ENCODE measurements at regions of chr15 and their contacts with region 1.

Region 1: DNA sequence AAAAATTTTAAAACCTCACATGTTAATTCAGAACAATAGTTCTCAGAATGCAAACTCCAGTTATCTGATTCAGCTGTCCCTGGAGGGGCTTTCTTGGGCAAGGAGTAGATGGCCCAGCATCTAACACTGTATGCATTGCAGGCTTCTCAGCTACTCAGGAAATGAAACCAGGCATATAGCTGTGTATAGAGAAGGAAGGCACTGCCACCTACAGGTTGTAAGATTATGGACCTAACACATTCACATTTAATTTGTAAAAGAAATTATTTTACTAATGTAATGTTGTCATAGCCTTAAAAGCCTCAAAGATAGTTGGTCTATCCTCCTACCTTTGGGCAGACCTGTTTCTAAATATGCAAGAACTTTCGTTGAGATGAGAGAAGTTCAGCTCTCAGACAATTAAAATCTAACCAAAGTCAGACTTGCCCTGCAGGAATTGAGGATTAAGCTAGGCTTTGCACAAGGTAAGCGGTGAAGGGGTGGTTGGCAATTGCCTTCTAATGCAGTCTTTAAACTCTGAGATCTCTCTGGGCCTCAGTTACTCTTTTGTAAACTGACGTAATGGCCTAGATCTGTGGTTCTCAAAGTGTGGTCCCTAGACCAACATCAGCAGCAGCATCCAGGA is 132.8 kb upstream of the SLC24A5 start:
- DNase-seq: no peak
- ATAC-seq: peak; percentile 95

Region 2: DNA sequence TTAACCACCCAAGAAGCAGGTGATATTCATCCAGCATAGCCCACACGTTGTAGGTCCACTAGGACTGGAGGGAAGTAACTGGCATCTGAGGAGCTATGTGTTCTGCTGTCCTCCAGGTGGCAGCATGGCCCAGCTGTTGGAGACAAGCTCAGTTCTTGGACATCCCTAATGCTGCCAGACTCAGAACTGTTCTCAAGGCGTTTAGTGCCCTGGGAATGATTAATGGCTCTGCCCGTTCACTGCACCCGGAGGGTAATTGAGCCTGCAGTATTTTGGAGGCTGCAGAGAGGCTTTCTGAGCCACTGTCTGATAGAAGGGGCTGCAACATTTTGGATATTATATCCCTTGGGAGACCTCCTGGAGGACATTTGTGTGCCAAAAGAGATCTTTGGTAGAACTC is 792.0 kb before region 1 on chr15:
- intact Hi-C with region 1: loop called (anchors 5 kb)
- DNase-seq: peak; percentile 81
- ATAC-seq: peak; percentile 96

Region 3: GRCh38 chr15:47473832-47474231 is 514.2 kb before region 1 on chr15:
- intact Hi-C with region 1: loop called (anchors 10 kb)
- DNase-seq: peak; percentile 73
- ATAC-seq: peak; percentile 94

Region 4: DNA sequence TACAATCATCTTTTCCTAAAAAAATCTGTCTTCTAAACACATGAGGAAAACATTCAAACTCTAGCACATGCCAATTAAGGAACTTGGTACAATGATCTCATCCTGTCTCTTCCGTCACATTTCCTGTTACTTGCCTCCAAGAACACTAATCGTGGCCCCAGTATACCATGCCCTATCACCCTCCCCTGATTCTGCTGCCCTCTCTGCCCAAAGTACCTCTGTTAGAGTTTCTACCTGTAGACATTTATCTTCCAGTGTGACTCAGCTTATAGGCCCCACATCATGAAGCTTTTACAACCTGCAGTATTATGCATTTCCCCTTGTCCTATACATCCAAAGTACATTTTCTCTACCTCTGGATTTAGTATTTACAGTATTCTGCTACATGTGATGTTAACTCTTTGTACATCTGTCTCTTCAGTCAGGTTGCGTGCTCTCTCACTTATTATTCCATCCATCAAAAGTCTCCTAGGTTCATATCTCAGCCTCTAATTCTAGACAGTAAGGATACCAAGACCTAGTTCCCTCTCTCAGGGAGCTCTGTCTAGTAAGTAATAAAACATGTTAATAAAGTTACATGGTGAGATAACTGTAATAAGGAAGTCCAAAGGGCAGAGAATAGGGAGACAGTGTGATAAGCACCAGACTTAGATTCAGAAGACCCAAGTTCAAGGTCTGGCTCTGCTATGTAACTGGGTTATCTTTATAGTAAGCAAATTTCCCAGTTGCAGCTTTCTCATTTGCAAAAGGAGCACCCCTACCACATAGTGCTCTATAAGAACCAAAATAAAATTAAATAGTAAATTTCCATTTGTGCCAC is 279.6 kb before region 1 on chr15:
- intact Hi-C with region 1: loop called (anchors 2 kb)
- DNase-seq: no peak
- ATAC-seq: no peak

Region 5: DNA sequence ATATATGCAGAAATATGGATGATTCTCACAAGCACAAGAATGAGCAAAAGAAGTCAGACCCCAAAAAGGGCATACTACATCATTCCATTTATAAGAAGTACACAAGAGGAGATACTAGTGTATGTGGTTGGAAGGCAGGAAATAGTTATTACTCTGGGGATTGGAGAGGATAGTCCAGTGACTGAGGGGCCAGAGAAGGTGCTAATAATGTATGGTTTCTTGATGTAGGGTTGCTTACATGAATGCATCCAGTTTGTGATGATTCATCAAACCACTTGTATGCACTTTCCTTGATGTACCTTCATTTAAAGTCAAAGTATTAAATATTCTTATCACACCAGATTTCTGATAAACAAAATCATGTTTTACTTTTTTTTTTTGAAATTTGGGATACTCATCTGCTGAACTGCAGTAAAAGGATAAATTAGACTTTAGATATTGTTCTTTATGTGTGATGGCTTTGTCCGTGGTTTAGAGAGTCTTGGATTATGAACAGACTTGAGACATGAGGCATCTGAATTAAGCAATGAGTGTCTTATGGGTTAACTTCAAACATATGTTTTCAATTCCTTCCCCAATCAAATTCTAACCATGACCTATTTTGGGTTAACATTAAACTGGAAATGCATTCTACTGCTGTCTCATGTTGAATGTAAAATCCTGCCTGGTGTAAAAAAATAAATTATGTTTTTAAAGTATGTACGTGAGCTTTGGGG is 99.5 kb before region 1 on chr15:
- intact Hi-C with region 1: no loop called
- DNase-seq: no peak
- ATAC-seq: no peak

Region 6: DNA sequence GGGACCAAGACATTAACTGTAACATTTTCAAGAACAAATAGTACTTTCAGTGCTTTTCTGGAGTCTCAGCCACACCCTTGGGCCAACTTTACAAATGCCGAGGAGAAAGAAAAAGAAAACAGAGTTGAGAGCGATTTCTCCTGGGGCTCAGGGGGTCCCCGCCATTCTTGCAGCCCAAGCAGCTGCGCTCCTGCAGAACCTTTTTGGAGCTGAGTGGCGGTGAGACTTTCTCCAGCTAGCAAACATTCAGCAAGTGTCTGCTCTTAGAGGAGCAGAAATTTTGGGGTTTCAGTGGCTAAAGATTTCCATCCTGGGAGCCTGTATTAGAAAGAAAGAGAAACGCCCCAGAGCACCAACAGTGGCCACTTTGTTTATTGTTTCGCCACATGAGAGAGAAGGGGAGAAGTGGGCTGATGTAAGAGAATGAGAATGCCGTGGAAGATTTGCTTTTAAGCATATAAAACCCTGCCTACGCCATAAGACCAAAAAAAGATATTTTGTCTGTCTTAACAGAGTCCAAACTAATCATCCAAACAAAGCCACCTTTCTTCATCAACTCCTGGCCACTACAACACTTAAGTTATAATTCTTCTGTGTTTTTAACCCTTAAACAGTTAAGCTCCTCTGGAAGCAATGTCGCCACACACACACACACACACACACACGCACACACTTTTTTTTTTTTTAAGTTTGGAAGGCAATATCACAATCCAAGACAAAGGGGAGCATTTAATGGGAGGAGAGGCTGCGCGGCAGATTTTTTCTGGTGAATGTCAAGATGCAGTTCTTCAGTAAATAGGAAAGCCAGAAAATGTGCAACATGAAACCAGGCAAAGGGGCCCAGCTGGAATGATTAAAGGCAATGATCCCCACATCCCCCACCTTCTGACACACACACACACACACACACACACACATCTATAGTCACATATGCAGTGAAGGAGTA is 909.1 kb after region 1 on chr15:
- intact Hi-C with region 1: no loop called
- DNase-seq: peak; percentile 40
- ATAC-seq: peak; percentile 87